ENCODE measurements at regions of chr4 and their contacts with region 1.

Region 1: GRCh38 chr4:139229534-139230039 is 50.4 kb downstream of the MGARP start:
- DNase-seq: peak; percentile 66
- ATAC-seq: peak; percentile 64
- H3K4me3 ChIP-seq: no peak overlapping the region
- H3K4me3 Mint-ChIP-seq: no peak overlapping the region
- H3K27ac ChIP-seq: no peak overlapping the region
- H3K27ac Mint-ChIP-seq: no peak overlapping the region
- H3K4me1 ChIP-seq: no peaks in the 10 kb centered on the region
- H3K4me1 Mint-ChIP-seq: peaks cover 1% of the 10 kb centered on the region
- H3K27me3 ChIP-seq: no peaks in the 10 kb centered on the region
- H3K27me3 Mint-ChIP-seq: no peaks in the 10 kb centered on the region
- CTCF ChIP-seq: peak; percentile 81

Region 2: DNA sequence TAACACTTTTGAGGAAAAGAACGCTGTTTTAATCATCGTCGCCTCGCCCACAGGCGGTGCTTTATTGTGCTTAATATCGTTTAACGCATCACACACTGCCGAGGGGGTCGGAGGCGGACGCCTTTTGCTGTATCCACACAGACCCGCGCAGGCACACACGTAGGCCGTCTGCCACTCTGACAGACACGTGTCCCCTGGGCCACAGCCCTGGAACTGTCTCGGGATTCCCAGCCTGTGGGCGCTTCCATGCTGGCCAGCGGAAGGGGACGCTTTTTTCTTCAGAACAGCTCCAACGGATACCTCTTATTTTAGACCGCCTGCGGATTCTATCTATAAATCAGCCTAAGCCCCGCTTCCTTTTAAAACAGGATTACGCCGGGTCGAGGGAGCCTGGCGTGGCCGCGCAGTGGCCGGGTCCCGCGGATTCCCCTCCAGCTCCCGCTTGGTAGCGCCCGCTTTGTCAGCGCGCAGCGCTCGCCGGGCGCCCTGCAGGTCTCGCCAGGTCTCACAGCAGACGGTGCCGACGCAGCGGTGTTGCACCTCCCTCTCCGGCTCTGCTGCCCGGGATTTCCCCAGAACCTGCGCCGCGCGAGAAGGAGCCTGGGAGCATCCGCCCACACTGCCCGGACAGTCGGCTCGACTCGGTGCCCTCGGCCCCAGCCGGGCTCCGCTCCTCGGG is 214.2 kb before region 1 on chr4 and contains the start of gene NOCT:
- CTCF ChIA-PET with region 1: no interaction called
- POLR2A ChIA-PET with region 1: no interaction called
- intact Hi-C with region 1: loop called (anchors 5 kb)
- DNase-seq: peak; percentile 97
- ATAC-seq: peak; percentile 92
- H3K4me3 ChIP-seq: peak within 1 kb of the TSS; percentile 56 to 86 (median 78)
- H3K4me3 Mint-ChIP-seq: peak within 1 kb of the TSS; percentile 92
- H3K27ac ChIP-seq: peak within 1 kb of the TSS; percentile 88 to 98
- H3K27ac Mint-ChIP-seq: peak within 1 kb of the TSS; percentile 98
- H3K4me1 ChIP-seq: peaks cover 14 to 18% of the 10 kb centered on the region in 2 donors
- H3K4me1 Mint-ChIP-seq: peaks cover 28% of the 10 kb centered on the region
- H3K27me3 ChIP-seq: no peaks in the 10 kb centered on the region
- H3K27me3 Mint-ChIP-seq: no peaks in the 10 kb centered on the region
- CTCF ChIP-seq: no peak
- total RNA-seq, gene NOCT: 2.6 and 3.0 TPM in 2 replicates

Region 3: DNA sequence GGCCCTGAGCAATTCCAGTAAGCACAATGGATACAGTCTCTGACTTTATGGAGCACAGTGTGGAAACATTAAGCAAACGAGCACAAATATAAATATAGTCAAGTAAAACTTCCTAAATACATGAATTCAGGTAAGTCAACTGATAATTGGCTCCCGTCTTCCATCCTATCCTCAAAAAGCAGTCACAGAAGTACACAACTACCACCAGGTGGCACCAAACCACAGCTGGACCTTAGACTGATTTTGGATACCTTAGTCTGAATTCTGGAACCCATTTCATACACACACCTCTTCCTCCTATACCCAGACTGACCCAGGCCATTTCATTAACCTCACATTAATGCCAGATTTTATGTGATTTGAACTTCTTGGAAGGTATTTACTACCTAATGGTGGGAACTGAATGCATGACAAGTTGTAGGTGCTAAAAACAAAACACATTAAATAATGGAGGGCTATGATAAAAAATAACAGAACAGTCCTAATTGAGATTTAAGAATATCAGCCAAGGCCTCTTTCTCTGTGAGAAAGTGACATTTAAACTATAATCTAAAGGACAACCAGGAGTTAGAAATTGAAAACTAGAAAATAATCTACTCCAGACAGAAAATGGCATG is 130.1 kb before region 1 on chr4:
- CTCF ChIA-PET with region 1: interaction called, 34 read pairs
- POLR2A ChIA-PET with region 1: no interaction called
- intact Hi-C with region 1: loop called (anchors 1 kb)
- DNase-seq: peak; percentile 87
- ATAC-seq: peak; percentile 75
- H3K4me3 ChIP-seq: no peak overlapping the region
- H3K4me3 Mint-ChIP-seq: no peak overlapping the region
- H3K27ac ChIP-seq: no peak overlapping the region
- H3K27ac Mint-ChIP-seq: no peak overlapping the region
- H3K4me1 ChIP-seq: no peaks in the 10 kb centered on the region
- H3K4me1 Mint-ChIP-seq: peaks cover 2% of the 10 kb centered on the region
- H3K27me3 ChIP-seq: no peaks in the 10 kb centered on the region
- H3K27me3 Mint-ChIP-seq: no peaks in the 10 kb centered on the region
- CTCF ChIP-seq: peak; percentile 89

Region 4: GRCh38 chr4:139214039-139214534 is 15.5 kb before region 1 on chr4:
- CTCF ChIA-PET with region 1: interaction called, 10 read pairs
- POLR2A ChIA-PET with region 1: interaction called, 4 read pairs
- intact Hi-C with region 1: no loop called
- DNase-seq: peak; percentile 80
- ATAC-seq: peak; percentile 99
- H3K4me3 ChIP-seq: no peak overlapping the region
- H3K4me3 Mint-ChIP-seq: peak overlapping the region; percentile 24
- H3K27ac ChIP-seq: peak overlapping the region; percentile 50 to 69
- H3K27ac Mint-ChIP-seq: peak overlapping the region; percentile 68
- H3K4me1 ChIP-seq: peaks cover 15 to 16% of the 10 kb centered on the region in 2 donors
- H3K4me1 Mint-ChIP-seq: peaks cover 19% of the 10 kb centered on the region
- H3K27me3 ChIP-seq: no peaks in the 10 kb centered on the region
- H3K27me3 Mint-ChIP-seq: no peaks in the 10 kb centered on the region
- CTCF ChIP-seq: no peak

Region 5: DNA sequence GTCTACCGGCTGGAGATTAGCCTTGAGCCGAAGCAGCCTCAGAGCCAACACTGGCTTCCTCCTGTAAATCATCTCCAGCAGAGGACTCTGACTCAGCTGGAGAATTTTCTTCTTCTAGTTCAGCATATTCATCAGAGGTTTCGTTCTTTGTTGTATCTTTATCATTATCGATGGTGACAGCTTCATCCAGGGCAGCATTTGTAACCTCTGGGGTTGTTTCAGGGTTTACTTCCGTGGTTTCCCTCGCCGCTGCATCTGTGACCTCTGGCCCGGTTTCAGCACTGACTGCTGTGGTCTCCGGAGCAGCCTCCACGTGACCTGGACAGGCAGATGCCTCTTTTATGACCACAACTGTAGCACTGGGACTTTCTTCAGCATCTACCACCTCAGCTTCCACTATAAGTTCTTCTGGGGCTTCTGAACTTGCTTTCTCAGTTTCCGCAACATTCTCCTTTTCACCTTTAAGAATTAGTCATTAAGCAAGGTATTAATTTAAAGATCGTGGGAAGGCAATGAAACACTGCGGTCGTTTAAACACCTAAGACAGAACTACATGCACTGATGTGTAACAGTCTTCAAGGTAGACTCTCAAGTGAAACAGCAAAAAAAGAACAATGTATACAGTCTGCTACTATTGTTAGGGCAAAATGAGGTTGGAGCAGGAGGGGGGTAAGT is 37.1 kb after region 1 on chr4:
- CTCF ChIA-PET with region 1: interaction called, 3 read pairs
- POLR2A ChIA-PET with region 1: no interaction called
- intact Hi-C with region 1: loop called (anchors 5 kb)
- DNase-seq: peak; percentile 76
- ATAC-seq: peak; percentile 97
- H3K4me3 ChIP-seq: peak overlapping the region in 4 of 5 experiments; percentile 14 to 50 (median 35)
- H3K4me3 Mint-ChIP-seq: peak overlapping the region; percentile 80
- H3K27ac ChIP-seq: no peak overlapping the region
- H3K27ac Mint-ChIP-seq: peak overlapping the region; percentile 51
- H3K4me1 ChIP-seq: peaks cover 10 to 11% of the 10 kb centered on the region in 2 donors
- H3K4me1 Mint-ChIP-seq: peaks cover 13% of the 10 kb centered on the region
- H3K27me3 ChIP-seq: no peaks in the 10 kb centered on the region
- H3K27me3 Mint-ChIP-seq: no peaks in the 10 kb centered on the region
- CTCF ChIP-seq: no peak

Region 6: DNA sequence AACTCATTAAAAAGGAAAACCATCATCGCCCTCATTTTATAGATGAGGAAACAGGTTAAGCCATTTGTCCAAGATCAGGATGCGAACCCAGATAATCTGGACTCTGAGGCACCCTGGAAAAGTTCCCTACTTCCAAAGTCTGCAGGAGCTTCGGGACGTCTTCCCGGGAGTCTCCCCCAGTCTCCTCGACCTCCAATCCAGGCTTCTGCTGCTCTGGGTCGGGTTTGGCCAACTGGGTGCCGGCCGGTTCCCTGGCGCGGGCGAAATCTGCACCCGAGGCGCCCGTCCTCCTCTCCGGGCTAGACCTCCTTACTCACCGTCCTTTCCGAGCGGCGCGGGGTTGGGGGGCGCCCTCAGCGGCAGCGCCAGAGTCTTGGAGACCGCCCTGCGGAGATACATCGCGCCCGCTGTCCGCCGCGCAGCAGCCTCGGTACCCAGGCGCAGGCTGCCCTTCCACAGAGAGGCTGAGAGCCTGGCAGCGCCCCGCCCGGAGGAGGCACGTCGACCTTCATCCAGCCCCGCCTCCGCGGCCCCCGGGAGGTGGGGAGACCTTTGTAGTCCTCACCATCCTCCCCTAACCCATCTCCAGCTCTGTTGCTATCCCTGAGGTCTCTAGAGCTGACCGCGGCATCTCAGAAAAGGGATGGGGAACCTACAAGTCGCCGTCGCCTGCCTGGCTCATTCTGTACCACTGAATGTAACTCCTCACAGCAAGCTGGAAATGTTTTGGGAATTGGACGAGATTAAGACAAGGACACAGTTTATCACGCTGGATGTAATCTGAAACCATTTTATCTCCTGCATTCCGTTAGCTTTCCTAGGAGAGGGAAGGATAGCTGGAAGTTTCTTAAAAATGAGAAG is 50.4 kb after region 1 on chr4 and contains the start of gene MGARP:
- CTCF ChIA-PET with region 1: no interaction called
- POLR2A ChIA-PET with region 1: no interaction called
- intact Hi-C with region 1: no loop called
- DNase-seq: peak; percentile 53
- ATAC-seq: peak; percentile 74
- H3K4me3 ChIP-seq: peak within 1 kb of the TSS; percentile 32 to 75 (median 56)
- H3K4me3 Mint-ChIP-seq: peak within 1 kb of the TSS; percentile 88
- H3K27ac ChIP-seq: no peak within 1 kb of the TSS
- H3K27ac Mint-ChIP-seq: no peak within 1 kb of the TSS
- H3K4me1 ChIP-seq: peaks cover 17 to 19% of the 10 kb centered on the region in 2 donors
- H3K4me1 Mint-ChIP-seq: peaks cover 18% of the 10 kb centered on the region
- H3K27me3 ChIP-seq: peaks cover 0 to 38% (median 32%) of the 10 kb centered on the region in 4 experiments
- H3K27me3 Mint-ChIP-seq: peaks cover 40% of the 10 kb centered on the region
- CTCF ChIP-seq: no peak
- total RNA-seq, gene MGARP: not detected in 2 replicates

Region 7: GRCh38 chr4:139295206-139295941 is 65.8 kb after region 1 on chr4:
- CTCF ChIA-PET with region 1: interaction called, 40 read pairs
- POLR2A ChIA-PET with region 1: interaction called, 4 read pairs
- intact Hi-C with region 1: loop called (anchors 1 kb)
- DNase-seq: peak; percentile 96
- ATAC-seq: peak; percentile 98
- H3K4me3 ChIP-seq: peak overlapping the region; percentile 78 to 96 (median 91)
- H3K4me3 Mint-ChIP-seq: peak overlapping the region; percentile 97
- H3K27ac ChIP-seq: peak overlapping the region; percentile 89 to 92
- H3K27ac Mint-ChIP-seq: peak overlapping the region; percentile 96
- H3K4me1 ChIP-seq: peaks cover 16 to 23% of the 10 kb centered on the region in 2 donors
- H3K4me1 Mint-ChIP-seq: peaks cover 26% of the 10 kb centered on the region
- H3K27me3 ChIP-seq: no peaks in the 10 kb centered on the region
- H3K27me3 Mint-ChIP-seq: no peaks in the 10 kb centered on the region
- CTCF ChIP-seq: peak; percentile 93

Measured in B cell (primary cell).